H1 (cell line): ENCODE measurements at regions of chr18 and their contacts with region 1.

Region 1: GRCh38 chr18:37422116-37422515 is 143.5 kb downstream of the CELF4 start:
- DNase-seq: no peak
- H3K4me3 ChIP-seq: no peak overlapping the region
- H3K27ac ChIP-seq: no peak overlapping the region
- H3K4me1 ChIP-seq: peaks cover 0 to 15% (median 6%) of the 10 kb centered on the region in 4 experiments; a peak in 3 of 7 replicates
- H3K27me3 ChIP-seq: no peaks in the 10 kb centered on the region; a peak in 3 of 7 replicates
- CTCF ChIP-seq: no peak
- EP300 ChIP-seq: no peak
- POLR2A ChIP-seq: no peak
- RAD21 ChIP-seq: no peak

Region 2: DNA sequence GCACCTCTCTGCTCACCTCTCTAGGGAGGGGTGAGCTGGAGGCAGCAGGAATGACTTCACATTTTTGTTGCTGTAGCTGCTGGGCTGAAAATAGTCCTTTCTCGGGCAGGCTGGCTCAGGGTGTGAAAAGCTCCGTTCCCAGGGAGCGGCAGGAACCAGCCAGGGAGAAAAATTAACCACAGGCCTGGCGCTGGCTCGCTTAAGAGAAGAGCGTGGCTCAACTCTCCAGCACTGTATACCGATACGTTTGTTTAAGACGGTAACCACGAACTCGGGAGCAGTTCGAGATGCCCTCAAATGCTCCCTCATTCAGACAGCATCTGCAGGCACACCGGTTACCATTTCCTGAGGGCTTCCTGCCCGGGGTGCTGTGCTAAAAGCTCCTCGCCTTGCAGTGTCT is 13.9 kb after region 1 on chr18:
- CTCF ChIA-PET with region 1: interaction called, 70 read pairs
- POLR2A ChIA-PET with region 1: interaction called, 3 read pairs
- DNase-seq: no peak
- H3K4me3 ChIP-seq: no peak overlapping the region
- H3K27ac ChIP-seq: no peak overlapping the region
- H3K4me1 ChIP-seq: no peaks in the 10 kb centered on the region; a peak in 1 of 7 replicates
- H3K27me3 ChIP-seq: no peaks in the 10 kb centered on the region; a peak in 1 of 7 replicates
- CTCF ChIP-seq: no peak
- EP300 ChIP-seq: no peak
- POLR2A ChIP-seq: no peak
- RAD21 ChIP-seq: no peak